ENCODE measurements at regions of chr20 and their contacts with region 1.

Region 1: GRCh38 chr20:1764136-1765033 is 106.8 kb upstream of the SIRPG start:
- H3K4me3 ChIP-seq: no peak overlapping the region
- H3K27ac ChIP-seq: no peak overlapping the region
- H3K4me1 ChIP-seq: 0 out of 2 replicates have a peak, but pooled peaks cover 3% of the 10 kb centered on the region
- CTCF ChIP-seq: 0 out of 2 replicates have a peak, but pooled peaks have one; percentile 57

Region 2: DNA sequence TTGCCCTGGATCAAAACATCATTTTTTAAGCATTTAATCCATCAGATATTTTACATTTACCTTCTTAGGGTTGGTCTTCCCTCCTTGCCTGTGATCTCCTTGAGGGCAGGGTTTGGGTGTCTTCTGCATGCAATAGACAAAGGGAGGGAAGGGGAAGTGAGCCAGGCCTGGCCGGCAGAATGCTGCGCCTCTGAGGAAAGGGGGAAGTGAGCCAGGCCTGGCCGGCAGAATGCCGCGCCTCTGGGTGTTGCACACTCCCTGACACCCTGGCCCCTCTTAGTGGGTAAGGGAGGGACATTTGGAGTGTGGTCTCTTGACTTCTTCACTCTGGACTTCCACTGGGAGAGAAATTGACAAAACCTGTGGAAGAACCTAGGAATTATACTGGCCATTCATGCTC is 633.5 kb before region 1 on chr20:
- CTCF ChIA-PET with region 1: no interaction called
- POLR2A ChIA-PET with region 1: no interaction called
- H3K4me3 ChIP-seq: no peak overlapping the region
- H3K27ac ChIP-seq: no peak overlapping the region
- H3K4me1 ChIP-seq: no peaks in the 10 kb centered on the region
- CTCF ChIP-seq: no peak

Region 3: DNA sequence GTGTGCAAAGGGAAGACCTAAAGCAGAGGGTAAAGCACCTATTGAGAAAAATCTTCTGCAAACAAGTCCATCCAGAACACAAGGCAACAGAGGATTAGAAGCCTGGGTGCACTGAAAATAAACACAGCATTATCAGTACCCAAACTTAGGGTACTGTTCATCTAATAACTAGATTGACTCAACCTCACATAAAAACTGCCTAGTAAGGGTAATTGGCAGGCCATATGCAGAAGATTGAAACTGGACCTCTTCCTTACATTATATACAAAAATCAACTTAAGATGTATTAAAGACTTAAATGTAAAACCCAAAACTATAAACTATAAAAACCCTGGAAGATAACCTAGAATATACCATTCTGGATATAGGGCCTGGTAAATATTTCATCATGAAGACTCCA is 15.6 kb before region 1 on chr20:
- CTCF ChIA-PET with region 1: interaction called, 23 read pairs
- POLR2A ChIA-PET with region 1: no interaction called
- H3K4me3 ChIP-seq: no peak overlapping the region
- H3K27ac ChIP-seq: no peak overlapping the region
- H3K4me1 ChIP-seq: no peaks in the 10 kb centered on the region
- CTCF ChIP-seq: no peak

Region 4: DNA sequence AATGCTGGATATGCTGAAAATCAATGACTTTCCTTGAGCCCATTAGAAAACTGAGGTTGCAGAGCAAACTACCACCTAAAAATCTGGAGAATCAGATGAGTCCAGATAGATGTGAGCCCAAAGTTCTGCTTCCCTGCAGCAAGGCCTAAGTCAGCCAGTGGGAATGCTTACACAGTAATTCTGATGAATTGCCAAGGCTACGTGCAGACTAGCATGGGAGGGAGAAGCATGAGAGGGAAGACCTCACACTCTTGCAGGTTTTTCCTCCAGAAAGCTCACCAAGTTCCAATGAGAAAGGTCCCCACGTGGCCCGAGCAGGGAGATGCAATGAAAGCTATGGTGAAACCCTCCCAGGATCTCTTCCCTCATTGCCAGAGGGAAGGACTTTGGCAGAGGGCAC is 26.0 kb after region 1 on chr20:
- CTCF ChIA-PET with region 1: interaction called, 13 read pairs
- POLR2A ChIA-PET with region 1: interaction called, 3 read pairs
- H3K4me3 ChIP-seq: no peak overlapping the region
- H3K27ac ChIP-seq: no peak overlapping the region
- H3K4me1 ChIP-seq: no peaks in the 10 kb centered on the region
- CTCF ChIP-seq: no peak

Region 5: GRCh38 chr20:1802385-1803060 is 38.1 kb after region 1 on chr20:
- CTCF ChIA-PET with region 1: interaction called, 14 read pairs
- POLR2A ChIA-PET with region 1: no interaction called
- H3K4me3 ChIP-seq: no peak overlapping the region
- H3K27ac ChIP-seq: no peak overlapping the region
- H3K4me1 ChIP-seq: 0 out of 2 replicates have a peak, but pooled peaks cover 3% of the 10 kb centered on the region
- CTCF ChIP-seq: peak; percentile 43; the same call in 1 of the 2 replicates